Caco-2 (cell line): ENCODE measurements at regions of chr3 and their contacts with region 1.

Region 1: GRCh38 chr3:63945558-63946096 is 33.4 kb upstream of the SCAANT1 start:
- DNase-seq: no peak
- H3K4me3 ChIP-seq: no peak overlapping the region
- H3K4me3 Mint-ChIP-seq: no peak overlapping the region
- H3K27ac Mint-ChIP-seq: no peak overlapping the region
- H3K4me1 ChIP-seq: peaks cover 10% of the 10 kb centered on the region; the same call in 1 of the 2 replicates
- H3K4me1 Mint-ChIP-seq: peaks cover 28% of the 10 kb centered on the region
- H3K27me3 ChIP-seq: no peaks in the 10 kb centered on the region
- H3K27me3 Mint-ChIP-seq: no peaks in the 10 kb centered on the region
- CTCF ChIP-seq: no peak

Region 2: GRCh38 chr3:63921741-63922482 is 23.7 kb before region 1 on chr3:
- CTCF ChIA-PET with region 1: no interaction called
- POLR2A ChIA-PET with region 1: no interaction called
- intact Hi-C with region 1: no loop called
- DNase-seq: no peak
- H3K4me3 ChIP-seq: no peak overlapping the region
- H3K4me3 Mint-ChIP-seq: no peak overlapping the region
- H3K27ac Mint-ChIP-seq: no peak overlapping the region
- H3K4me1 ChIP-seq: no peaks in the 10 kb centered on the region
- H3K4me1 Mint-ChIP-seq: no peaks in the 10 kb centered on the region
- H3K27me3 ChIP-seq: no peaks in the 10 kb centered on the region
- H3K27me3 Mint-ChIP-seq: no peaks in the 10 kb centered on the region
- CTCF ChIP-seq: no peak

Region 3: DNA sequence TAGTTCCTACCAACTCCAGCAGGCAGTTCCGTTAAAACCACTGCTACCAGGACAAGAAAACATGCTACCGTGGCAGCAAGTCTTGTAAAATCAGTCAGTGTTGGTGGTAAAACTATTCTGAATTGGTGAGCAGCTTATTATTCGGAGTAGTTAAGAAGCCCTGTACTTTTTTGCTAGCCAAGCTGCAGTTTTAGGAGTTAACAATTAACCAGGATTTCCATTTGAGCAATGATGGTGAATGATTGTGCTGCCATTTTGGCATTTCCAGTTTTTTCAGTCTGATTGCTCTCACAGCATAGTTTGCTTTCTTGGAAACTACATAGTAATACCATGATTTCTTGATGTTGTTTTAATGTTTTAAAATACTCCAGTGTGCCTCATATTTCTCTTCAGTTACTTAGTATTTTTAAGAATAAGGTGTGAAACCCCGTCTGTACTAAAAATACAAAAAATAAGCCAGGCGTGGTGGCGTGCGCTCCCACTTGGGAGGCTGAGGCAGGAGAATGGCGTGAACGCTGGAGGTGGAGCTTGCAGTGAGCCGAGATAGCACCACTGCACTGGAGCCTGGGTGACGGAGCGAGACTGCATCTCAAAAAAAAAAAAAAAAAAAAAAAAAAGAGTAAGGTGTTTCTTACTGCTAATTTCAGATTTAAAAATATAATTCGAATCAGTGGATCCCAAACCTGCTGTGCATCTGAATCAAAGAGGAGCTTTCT is 10.4 kb after region 1 on chr3:
- CTCF ChIA-PET with region 1: no interaction called
- POLR2A ChIA-PET with region 1: no interaction called
- intact Hi-C with region 1: loop called (anchors 1 kb)
- DNase-seq: no peak
- H3K4me3 ChIP-seq: no peak overlapping the region
- H3K4me3 Mint-ChIP-seq: no peak overlapping the region
- H3K27ac Mint-ChIP-seq: no peak overlapping the region
- H3K4me1 ChIP-seq: peaks cover 10% of the 10 kb centered on the region; the same call in 1 of the 2 replicates
- H3K4me1 Mint-ChIP-seq: peaks cover 19% of the 10 kb centered on the region
- H3K27me3 ChIP-seq: no peaks in the 10 kb centered on the region
- H3K27me3 Mint-ChIP-seq: no peaks in the 10 kb centered on the region
- CTCF ChIP-seq: no peak

Region 4: DNA sequence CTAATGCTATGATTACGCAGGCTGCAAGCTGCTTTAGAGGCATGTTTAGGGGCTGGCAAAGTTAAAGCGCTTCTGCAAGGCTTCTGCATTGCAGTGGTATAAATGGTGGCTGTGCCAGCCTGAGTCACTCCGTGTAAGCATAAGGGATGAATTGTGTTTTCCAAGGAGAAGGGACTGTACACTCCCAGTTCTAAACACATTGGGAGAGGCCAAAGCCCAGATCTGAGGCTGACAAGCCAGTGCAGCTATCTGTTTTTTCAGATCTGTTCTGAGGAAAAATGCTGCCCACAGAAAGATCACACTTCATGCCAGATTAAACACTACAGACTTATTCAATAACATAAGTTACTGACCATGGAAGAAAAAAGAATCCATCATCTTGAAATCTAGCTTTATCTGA is 195.9 kb after region 1 on chr3:
- CTCF ChIA-PET with region 1: no interaction called
- POLR2A ChIA-PET with region 1: no interaction called
- intact Hi-C with region 1: no loop called
- DNase-seq: no peak
- H3K4me3 ChIP-seq: no peak overlapping the region
- H3K4me3 Mint-ChIP-seq: no peak overlapping the region
- H3K27ac Mint-ChIP-seq: no peak overlapping the region
- H3K4me1 ChIP-seq: no peaks in the 10 kb centered on the region
- H3K4me1 Mint-ChIP-seq: no peaks in the 10 kb centered on the region
- H3K27me3 ChIP-seq: no peaks in the 10 kb centered on the region
- H3K27me3 Mint-ChIP-seq: no peaks in the 10 kb centered on the region
- CTCF ChIP-seq: no peak